Activated naive CD4-positive, alpha-beta T cell treated with anti-CD3 and anti-CD28 coated beads for 36 hours (primary cell): ENCODE measurements at regions of chr16 and their contacts with region 1.

Region 1: DNA sequence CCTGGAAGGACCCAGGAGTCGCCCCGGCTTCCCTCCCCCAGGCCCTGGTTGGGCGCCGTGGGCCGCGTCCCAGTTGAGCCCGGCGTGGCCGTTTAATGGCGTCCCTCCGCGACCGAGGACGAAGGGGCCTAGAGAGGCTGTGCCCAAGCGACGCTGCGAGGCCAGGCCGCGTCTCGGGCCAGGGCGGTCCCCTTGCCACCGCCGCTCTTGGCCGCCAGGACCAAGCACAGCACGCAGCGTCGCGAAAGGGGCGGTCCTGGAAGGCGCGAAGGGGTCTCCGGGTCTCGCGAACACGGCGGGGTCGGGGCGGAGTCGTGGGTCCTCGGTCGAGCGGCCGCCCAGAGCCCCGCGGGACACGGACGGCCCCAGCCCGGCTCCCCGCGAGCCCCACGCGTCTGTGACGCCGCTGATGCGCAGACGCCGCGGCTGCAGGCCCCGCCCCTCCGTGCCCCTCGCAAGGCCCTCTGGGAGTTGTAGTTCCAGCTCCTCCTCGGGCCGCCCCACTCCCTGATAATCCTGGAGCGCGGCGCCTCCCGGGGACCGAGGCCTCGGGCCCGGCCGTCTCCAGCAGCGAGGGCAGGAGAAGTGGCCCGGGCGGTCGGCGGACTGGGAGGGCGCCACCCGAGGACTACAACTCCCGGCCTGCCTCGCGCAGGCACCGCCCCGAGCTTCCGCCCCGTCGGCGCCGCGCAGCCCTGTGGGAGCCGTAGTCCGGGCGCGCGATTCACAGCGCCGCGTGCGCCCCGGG is at the start of gene CAPN15:
- DNase-seq: peak; percentile 84
- H3K4me3 Mint-ChIP-seq: peak within 1 kb of the TSS; percentile 87
- H3K27ac Mint-ChIP-seq: peak within 1 kb of the TSS; percentile 96
- H3K4me1 Mint-ChIP-seq: peaks cover 40% of the 10 kb centered on the region
- H3K27me3 Mint-ChIP-seq: no peaks in the 10 kb centered on the region
- total RNA-seq, gene CAPN15: 54.4 to 56.9 TPM

Region 2: DNA sequence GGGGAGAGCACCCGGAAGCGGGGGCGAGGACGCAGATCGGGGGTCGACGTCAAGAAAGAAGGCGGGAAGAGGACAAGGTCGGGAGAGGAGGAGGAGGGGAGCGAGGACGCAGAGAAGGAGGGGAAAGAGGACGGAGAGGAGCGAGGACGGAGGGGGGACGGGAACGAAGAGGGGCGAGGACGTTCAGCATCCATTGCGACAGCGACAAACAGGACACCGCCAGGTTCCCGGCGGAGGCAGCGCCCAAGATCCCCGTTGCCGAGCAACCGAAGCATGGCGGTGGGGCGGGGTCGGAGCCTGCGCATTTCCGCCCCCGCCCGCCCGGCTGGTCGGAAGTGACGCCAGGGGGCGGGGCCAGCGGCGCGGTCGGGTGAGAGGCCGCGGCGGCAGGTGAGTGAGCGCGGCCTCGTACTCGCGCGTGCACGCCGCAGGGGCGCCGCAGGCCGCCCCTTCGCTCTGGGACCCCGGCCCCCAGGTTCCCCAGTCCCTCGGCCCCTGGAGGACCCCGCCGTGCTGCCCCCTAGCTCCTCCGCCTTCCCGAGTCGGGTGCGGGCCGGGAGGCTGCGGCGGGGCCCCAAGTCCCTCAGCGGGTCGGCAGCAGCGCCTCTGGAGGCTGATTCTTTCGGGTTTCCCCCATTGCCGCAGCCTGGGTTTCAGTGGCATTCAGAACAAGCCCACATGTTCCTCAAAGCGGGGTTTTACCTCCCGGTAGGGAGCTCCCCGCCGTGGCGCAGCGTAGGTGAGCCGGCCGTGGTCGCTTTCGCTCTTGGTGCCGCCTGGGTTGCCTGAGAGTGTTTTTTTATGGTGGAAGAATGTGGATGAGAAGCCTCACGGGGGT is 292.5 kb before region 1 on chr16 and contains the start of gene FAM234A:
- CTCF ChIA-PET with region 1: no interaction called
- intact Hi-C with region 1: loop called (anchors 2 kb)
- DNase-seq: peak; percentile 97
- H3K4me3 Mint-ChIP-seq: peak within 1 kb of the TSS; percentile 94
- H3K27ac Mint-ChIP-seq: peak within 1 kb of the TSS; percentile 97
- H3K4me1 Mint-ChIP-seq: peaks cover 23% of the 10 kb centered on the region
- H3K27me3 Mint-ChIP-seq: no peaks in the 10 kb centered on the region
- total RNA-seq, gene FAM234A: 25.9 to 27.4 TPM

Region 3: DNA sequence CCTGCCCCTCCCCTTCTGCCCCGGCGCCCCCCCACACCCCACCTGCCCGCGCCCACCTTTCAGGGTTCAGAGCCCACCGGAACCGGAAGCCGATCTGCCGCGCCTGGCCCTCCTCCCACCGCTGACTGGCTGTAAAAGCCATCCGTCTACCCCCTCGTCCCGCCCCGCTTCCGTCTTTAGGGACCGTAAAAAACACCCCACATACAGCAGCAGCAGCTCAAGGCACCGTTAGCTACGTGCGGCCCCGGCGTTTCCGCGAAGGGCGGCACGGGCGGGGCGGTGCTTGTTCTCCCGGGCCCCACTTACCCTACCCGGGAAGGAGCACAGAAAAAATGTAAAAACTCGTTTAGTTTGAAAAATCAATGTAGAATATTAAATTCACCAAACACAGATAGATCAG is 156.7 kb before region 1 on chr16 and contains the start of gene MRPL28:
- CTCF ChIA-PET with region 1: no interaction called
- intact Hi-C with region 1: no loop called
- DNase-seq: peak; percentile 97
- H3K4me3 Mint-ChIP-seq: peak within 1 kb of the TSS; percentile 81
- H3K27ac Mint-ChIP-seq: peak within 1 kb of the TSS; percentile 85
- H3K4me1 Mint-ChIP-seq: peaks cover 14% of the 10 kb centered on the region
- H3K27me3 Mint-ChIP-seq: no peaks in the 10 kb centered on the region
- total RNA-seq, gene MRPL28: 68.3 to 74.0 TPM

Region 4: DNA sequence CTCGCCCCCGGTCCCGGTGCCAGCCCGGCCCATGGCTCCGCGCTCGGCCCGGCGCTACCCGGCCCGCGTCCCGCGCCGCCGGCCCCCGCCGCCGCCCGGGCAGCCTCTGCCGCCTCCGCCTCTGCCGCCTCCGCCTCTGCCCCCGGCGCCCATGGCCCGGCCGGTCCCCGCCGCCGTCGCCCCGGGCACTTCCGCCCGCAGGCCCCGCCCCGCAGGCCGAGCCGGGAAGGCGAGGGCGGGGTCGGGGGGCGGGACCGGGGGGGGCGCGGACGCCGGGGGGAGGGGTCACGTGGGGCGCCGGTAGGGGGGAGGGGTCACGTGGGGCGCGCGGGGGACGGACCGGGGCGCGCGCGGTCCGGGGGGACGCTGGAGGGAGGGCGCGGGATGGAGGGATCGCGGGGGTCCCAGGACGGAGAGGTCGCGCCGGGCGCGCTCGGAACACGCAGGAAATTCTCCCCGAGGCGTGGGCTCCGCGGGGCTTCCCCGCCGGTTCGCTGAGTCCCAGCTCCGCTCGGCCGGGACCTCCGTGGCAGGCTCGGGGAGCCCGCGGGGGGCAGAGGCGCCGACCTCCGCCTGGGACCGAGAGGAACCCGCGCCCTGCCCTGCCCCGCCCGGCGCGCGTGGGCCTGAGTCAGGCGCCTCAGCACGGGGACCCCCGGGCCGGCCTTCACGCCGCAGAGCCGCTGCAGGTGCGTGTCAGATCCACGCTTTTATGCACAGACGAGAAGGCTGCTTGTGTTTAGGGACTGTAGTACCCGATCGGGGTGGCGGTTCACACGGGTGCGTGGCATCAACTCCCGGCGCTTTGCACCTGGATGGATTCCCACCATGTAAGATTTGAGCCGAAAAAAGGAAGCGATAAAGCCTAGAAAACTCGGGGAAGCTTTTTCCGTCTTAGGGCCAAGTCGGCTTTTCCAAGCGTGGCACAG is 145.1 kb before region 1 on chr16 and contains the start of gene PGAP6:
- CTCF ChIA-PET with region 1: no interaction called
- intact Hi-C with region 1: loop called (anchors 1 kb)
- DNase-seq: peak; percentile 67
- H3K4me3 Mint-ChIP-seq: peak within 1 kb of the TSS; percentile 80
- H3K27ac Mint-ChIP-seq: peak within 1 kb of the TSS; percentile 66
- H3K4me1 Mint-ChIP-seq: peaks cover 25% of the 10 kb centered on the region
- H3K27me3 Mint-ChIP-seq: no peaks in the 10 kb centered on the region
- total RNA-seq, gene PGAP6: 19.9 to 20.9 TPM

Region 5: DNA sequence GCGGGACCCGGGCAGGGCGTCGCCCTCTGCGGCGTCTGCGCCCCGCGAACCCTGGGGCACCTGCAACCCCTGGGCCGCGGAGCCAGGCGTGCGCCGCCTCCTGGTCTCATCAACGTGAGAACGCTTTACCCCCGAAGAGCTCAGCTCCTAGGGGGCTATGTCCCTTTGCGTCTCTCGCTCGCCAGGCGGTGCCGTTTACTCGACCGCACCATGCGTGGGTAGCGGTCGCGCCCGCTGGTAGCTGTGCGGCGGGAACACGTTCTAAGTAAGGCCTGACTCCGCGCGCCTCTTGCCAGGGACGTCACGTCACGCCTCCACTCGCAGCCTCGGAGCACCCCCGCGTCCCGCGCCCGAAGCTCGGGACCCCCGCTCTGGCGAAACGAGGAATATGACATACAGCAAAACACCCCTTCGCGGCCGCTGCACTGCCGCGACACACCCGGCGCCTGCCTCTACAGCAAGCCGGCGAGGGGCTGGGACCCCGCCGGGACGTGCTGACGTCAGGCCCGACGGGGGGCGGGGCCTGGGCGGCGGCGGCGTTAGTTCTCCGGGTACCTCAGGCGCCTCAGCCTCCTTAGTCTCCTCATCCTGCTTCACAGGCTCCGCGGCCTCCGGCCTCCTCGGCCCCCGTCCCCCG is 102.0 kb before region 1 on chr16 and contains the start of gene RAB11FIP3:
- CTCF ChIA-PET with region 1: no interaction called
- intact Hi-C with region 1: loop called (anchors 1 kb)
- DNase-seq: peak; percentile 78
- H3K4me3 Mint-ChIP-seq: peak within 1 kb of the TSS; percentile 81
- H3K27ac Mint-ChIP-seq: peak within 1 kb of the TSS; percentile 24
- H3K4me1 Mint-ChIP-seq: peaks cover 26% of the 10 kb centered on the region
- H3K27me3 Mint-ChIP-seq: peaks cover 2% of the 10 kb centered on the region
- total RNA-seq, gene RAB11FIP3: 15.8 to 18.2 TPM

Region 6: DNA sequence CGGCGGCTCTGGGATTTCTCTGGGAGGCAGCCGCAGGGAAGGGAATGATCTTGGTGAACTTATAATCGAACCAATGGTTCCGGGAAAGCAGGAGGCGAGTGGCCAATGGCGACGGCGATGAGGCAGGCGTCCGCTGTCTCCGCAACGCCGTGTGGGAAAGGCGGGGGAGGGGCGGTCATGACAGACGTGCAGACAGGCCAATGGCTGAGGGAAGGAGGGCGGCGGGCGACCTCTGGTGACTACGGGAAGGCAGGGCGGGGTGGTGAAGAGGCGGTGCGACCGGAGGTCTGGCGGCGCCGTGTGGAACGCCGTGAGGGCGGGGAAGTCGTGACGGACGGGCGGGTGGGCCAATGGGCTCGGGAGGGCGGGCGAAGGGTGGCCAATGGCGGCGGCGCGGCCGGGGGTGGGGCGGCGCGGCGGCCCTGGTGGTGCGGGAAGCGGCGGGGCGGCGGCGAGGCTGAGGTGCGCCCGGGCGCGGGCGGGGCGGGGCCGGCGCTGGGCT is 62.5 kb after region 1 on chr16 and contains the start of gene RAB40C:
- CTCF ChIA-PET with region 1: no interaction called
- intact Hi-C with region 1: loop called (anchors 1 kb)
- DNase-seq: peak; percentile 100
- H3K4me3 Mint-ChIP-seq: peak within 1 kb of the TSS; percentile 85
- H3K27ac Mint-ChIP-seq: peak within 1 kb of the TSS; percentile 96
- H3K4me1 Mint-ChIP-seq: peaks cover 29% of the 10 kb centered on the region
- H3K27me3 Mint-ChIP-seq: no peaks in the 10 kb centered on the region
- total RNA-seq, gene RAB40C: 6.3 to 7.3 TPM

Region 7: GRCh38 chr16:684067-684794 is 157.1 kb after region 1 on chr16 and contains the start of gene JMJD8:
- CTCF ChIA-PET with region 1: no interaction called
- intact Hi-C with region 1: loop called (anchors 5 kb)
- DNase-seq: peak; percentile 98
- H3K4me3 Mint-ChIP-seq: peak within 1 kb of the TSS; percentile 80
- H3K27ac Mint-ChIP-seq: peak within 1 kb of the TSS; percentile 46
- H3K4me1 Mint-ChIP-seq: peaks cover 42% of the 10 kb centered on the region
- H3K27me3 Mint-ChIP-seq: no peaks in the 10 kb centered on the region
- total RNA-seq, gene JMJD8: 18.2 to 20.5 TPM

Region 8: DNA sequence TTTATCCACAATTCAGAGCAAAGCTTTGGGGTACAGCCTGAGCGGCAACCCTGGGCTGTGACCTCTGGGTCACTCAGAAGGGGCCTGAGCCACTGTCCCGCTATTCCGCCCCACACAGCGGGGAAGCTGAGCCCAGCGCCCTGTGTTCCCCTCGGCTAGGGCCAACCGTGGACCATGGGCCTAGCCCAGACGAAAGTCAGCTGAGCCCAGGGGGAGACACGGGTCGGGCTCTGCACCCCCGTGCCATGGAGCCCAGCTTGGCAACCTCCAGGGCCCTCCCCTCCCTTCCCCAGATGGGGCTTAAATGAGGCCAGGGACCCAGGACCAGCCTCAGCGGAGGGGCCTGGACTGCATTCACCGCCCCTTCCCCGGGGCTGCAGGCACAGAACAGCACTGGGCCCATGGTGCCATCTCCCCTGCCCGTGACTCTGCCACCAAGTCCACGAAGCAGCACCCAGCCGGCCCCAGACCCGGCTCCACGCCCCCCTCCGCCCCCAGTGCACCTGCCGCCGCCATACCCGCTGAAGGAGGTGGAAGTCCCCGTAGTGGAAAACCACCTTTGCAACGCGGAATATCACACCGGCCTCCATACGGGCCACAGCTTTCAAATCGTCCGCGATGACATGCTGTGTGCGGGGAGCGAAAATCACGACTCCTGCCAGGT is 730.5 kb after region 1 on chr16:
- CTCF ChIA-PET with region 1: no interaction called
- intact Hi-C with region 1: no loop called
- DNase-seq: no peak
- H3K4me3 Mint-ChIP-seq: no peak overlapping the region
- H3K27ac Mint-ChIP-seq: no peak overlapping the region
- H3K4me1 Mint-ChIP-seq: peaks cover 5% of the 10 kb centered on the region
- H3K27me3 Mint-ChIP-seq: peaks cover 17% of the 10 kb centered on the region

Region 9: GRCh38 chr16:1308977-1309885 is 782.1 kb after region 1 on chr16 and contains the start of gene UBE2I:
- CTCF ChIA-PET with region 1: no interaction called
- intact Hi-C with region 1: loop called (anchors 2 kb)
- DNase-seq: peak; percentile 98
- H3K4me3 Mint-ChIP-seq: peak within 1 kb of the TSS; percentile 94
- H3K27ac Mint-ChIP-seq: peak within 1 kb of the TSS; percentile 99
- H3K4me1 Mint-ChIP-seq: peaks cover 41% of the 10 kb centered on the region
- H3K27me3 Mint-ChIP-seq: no peaks in the 10 kb centered on the region
- total RNA-seq, gene UBE2I: 273 to 297 TPM